ENCODE measurements at regions of chr2 and their contacts with region 1.

Region 1: GRCh38 chr2:25851740-25852503 is 26.4 kb downstream of the ASXL2 start:
- DNase-seq: peak; percentile 22
- H3K4me3 Mint-ChIP-seq: peak overlapping the region; percentile 67
- H3K27ac Mint-ChIP-seq: peak overlapping the region; percentile 78
- H3K4me1 Mint-ChIP-seq: peaks cover 39% of the 10 kb centered on the region
- H3K27me3 Mint-ChIP-seq: no peaks in the 10 kb centered on the region

Region 2: DNA sequence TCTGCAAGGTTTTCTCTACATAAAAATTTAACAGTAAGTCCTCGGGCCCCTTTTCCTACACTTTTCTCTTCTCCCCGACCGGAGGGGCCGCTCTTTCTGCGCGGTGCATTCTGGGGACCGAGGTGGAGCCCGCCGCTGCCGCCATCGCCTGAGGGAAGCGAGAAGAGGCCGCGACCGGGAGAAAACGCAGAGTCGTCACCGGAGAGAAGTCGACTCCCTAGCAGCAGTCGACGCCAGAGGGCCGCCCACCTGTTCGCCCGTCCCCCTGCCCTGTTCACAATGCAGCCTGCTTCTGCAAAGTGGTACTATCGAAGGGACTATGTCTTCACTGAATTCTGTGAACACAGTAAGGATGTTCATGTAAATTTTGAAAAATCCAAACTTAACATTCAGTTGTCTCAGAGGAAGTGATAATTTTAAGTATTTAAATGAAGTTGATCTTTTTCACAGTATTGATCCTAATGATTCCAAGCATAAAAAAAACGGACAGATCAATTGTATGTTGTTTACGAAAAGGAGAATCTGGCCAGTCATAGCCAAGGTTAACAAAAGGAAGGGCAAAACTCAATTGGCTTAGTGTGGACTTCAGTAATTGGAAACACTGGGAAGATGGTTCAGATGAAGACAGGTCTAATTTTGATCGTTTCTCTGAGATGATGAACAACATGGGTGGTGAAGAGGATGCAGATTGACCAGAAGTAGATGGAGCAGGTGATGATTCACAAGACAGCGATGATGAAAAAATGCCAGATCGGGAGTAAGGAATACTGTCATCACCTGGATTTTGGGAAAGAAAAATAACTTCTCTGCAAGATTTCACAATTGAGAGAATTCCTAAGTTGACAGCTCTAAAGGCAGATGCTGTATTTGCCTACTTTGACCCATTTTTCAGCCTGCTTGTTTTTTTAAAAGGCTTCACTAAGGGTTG is 29.5 kb before region 1 on chr2:
- CTCF ChIA-PET with region 1: interaction called, 8 read pairs
- intact Hi-C with region 1: loop called (anchors 1 kb)
- DNase-seq: peak; percentile 83
- H3K4me3 Mint-ChIP-seq: peak overlapping the region; percentile 71
- H3K27ac Mint-ChIP-seq: peak overlapping the region; percentile 52
- H3K4me1 Mint-ChIP-seq: peaks cover 63% of the 10 kb centered on the region
- H3K27me3 Mint-ChIP-seq: no peaks in the 10 kb centered on the region

Region 3: DNA sequence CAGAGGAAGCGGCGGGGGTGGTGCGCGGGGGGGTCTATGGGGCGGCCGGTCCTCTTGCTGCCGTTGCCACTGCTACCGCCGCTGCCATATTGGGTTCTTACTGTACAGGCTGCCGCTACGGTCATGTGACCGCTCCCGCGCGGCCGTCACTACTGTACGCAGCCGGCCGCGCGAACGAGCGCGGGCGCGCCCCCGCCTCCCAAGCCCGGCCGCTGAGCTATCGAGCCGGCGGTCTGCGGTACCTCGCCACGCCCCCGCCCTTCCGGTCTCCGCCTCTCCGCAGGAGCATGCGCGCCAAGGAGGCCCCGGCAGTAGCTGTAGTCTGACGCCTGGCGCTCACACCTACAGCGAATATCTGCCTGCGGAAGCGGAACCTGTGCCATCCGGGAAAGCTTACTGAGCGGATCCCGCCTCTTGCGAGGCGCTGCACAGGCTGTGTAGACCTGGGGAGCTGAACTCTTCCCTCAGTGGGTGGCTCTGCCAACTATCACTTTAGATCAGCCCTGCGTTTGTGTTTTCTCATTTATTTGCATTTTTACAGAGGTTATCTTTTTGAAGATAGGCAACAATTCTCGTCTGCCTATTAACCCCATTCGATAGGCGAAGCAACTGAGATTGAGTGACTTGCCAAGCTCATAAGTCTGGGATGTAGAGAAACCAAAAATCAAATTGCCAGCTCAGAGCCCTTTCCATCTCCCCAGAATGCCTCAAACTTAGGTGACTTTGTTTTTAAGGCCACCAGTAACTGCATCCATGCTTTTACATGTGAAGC is 26.6 kb after region 1 on chr2 and contains the start of gene ASXL2:
- CTCF ChIA-PET with region 1: interaction called, 30 read pairs
- intact Hi-C with region 1: loop called (anchors 1 kb)
- DNase-seq: peak; percentile 97
- H3K4me3 Mint-ChIP-seq: peak within 1 kb of the TSS; percentile 91
- H3K27ac Mint-ChIP-seq: peak within 1 kb of the TSS; percentile 96
- H3K4me1 Mint-ChIP-seq: peaks cover 43% of the 10 kb centered on the region
- H3K27me3 Mint-ChIP-seq: no peaks in the 10 kb centered on the region
- total RNA-seq, gene ASXL2: 25.2 to 29.1 TPM

Region 4: GRCh38 chr2:25951071-25951547 is 99.2 kb after region 1 on chr2:
- CTCF ChIA-PET with region 1: interaction called, 35 read pairs
- intact Hi-C with region 1: loop called (anchors 1 kb)
- DNase-seq: peak; percentile 80
- H3K4me3 Mint-ChIP-seq: no peak overlapping the region
- H3K27ac Mint-ChIP-seq: no peak overlapping the region
- H3K4me1 Mint-ChIP-seq: no peaks in the 10 kb centered on the region
- H3K27me3 Mint-ChIP-seq: no peaks in the 10 kb centered on the region

Region 5: GRCh38 chr2:25991965-25992364 is 140.0 kb after region 1 on chr2:
- CTCF ChIA-PET with region 1: interaction called, 16 read pairs
- intact Hi-C with region 1: loop called (anchors 1 kb)
- DNase-seq: no peak
- H3K4me3 Mint-ChIP-seq: no peak overlapping the region
- H3K27ac Mint-ChIP-seq: no peak overlapping the region
- H3K4me1 Mint-ChIP-seq: peaks cover 6% of the 10 kb centered on the region
- H3K27me3 Mint-ChIP-seq: no peaks in the 10 kb centered on the region

Region 6: GRCh38 chr2:26330113-26330549 is 478.2 kb after region 1 on chr2:
- CTCF ChIA-PET with region 1: no interaction called
- intact Hi-C with region 1: loop called (anchors 2 kb)
- DNase-seq: peak; percentile 95
- H3K4me3 Mint-ChIP-seq: no peak overlapping the region
- H3K27ac Mint-ChIP-seq: no peak overlapping the region
- H3K4me1 Mint-ChIP-seq: peaks cover 7% of the 10 kb centered on the region
- H3K27me3 Mint-ChIP-seq: no peaks in the 10 kb centered on the region

Measured in activated naive CD4-positive, alpha-beta T cell treated with anti-CD3 and anti-CD28 coated beads for 36 hours (primary cell).